KBM-7 (cell line): ENCODE measurements at regions of chr3 and their contacts with region 1.

Region 1: DNA sequence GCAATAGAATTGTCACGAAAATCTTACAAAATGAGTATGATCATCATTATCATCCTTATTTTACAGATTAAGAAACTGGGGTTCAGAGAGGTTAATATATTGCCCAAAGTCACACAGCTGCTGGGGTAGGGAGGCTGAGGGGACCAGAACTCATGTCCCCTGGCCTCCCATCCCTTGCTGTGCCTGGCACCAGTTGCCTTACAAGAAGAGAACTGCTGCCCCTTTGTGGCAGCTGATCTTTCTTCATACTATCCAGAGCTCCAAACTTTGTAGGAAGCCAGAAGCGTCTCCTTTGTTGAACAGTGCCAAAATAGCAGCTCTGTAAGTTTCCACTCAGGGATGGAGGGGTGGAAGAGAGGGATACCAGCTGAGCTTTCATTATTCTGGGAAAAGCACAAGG is 236.8 kb upstream of the TBC1D5 start:
- DNase-seq: peak; percentile 84

Region 2: GRCh38 chr3:18127174-18127858 is 148.1 kb after region 1 on chr3:
- in situ Hi-C with region 1: loop called (anchors 10 kb)
- DNase-seq: peak; percentile 97

Region 3: DNA sequence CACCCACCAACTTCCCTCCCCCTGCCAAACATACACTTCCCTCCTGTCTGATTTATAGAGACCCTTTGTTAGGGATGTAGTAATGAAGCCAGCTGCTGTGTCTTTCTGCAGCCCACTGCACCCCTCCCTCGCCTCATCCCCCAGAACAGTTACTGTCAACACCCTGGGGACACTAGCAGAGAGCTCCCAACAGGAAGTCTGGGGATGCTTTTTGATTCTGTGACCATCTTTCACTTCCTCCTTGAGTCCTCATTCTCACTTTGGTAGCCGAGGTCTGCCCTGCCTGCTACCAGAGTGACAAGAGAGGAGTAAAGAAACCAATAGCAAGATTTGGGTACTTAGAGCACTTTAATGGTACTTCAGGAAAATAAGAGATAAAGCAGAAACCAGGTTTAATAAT is 244.3 kb after region 1 on chr3:
- in situ Hi-C with region 1: loop called (anchors 25 kb)
- DNase-seq: peak; percentile 98